KBM-7 (cell line): ENCODE measurements at regions of chr20 and their contacts with region 1.

Region 1: GRCh38 chr20:9616833-9617489 is 102.6 kb downstream of the LAMP5 start:
- DNase-seq: peak; percentile 43

Region 2: DNA sequence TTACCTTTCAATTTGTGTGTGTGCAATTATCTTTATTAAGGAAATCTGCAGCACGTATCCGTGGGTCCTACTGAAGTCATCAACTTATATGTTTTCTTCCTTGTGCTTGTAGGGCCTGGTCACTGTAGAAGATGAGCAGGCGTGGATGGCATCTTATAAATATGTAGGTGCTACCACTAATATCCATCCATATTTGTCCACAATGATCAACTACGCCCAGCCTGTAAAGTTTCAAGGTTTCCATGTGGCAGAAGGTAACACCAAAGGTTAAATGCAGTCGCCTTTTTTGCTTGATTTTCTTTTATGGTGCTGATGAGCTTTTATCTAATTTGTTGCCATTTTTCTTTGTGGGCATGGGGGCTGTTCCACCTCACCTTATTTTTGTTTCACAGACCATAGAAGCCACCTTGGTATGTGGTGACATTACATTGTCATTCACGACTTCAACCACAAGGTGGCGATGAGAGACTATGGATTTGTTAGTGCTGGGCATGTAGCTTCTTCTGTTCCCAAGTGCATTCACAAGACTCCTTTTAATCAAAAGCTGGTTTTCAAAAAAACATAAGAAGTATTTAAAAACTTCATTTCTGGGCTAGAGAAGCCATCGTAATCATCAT is 209.0 kb before region 1 on chr20:
- in situ Hi-C with region 1: loop called (anchors 25 kb)
- DNase-seq: peak; percentile 76